Transverse colon (tissue), 4 donors: ENCODE measurements at regions of chr3 and their contacts with region 1.

Region 1: DNA sequence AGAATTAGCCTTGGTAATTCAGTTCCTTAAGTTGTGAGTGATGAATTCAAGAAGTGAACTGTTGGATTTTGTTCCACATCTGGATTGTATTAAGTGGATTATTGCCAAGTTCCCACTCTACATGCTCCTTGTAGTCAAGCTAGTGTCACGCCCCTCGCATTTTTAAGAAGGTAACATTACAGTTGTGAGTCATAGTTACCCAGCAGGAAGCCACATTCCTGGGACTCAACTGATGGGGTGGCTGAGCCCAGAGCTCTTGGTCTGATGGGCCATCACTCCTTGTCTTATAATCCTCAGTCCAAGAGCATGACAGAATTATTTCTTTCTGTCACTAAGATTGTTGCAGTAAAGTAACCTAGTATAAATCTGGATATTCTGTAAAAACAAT is 102.7 kb downstream of the PTPRG start:
- DNase-seq: no peak
- H3K4me3 ChIP-seq: no peak overlapping the region
- H3K27ac ChIP-seq: no peak overlapping the region
- H3K4me1 ChIP-seq: peaks cover 7 to 47% (median 14%) of the 10 kb centered on the region in 4 donors
- H3K27me3 ChIP-seq: no peaks in the 10 kb centered on the region
- CTCF ChIP-seq: no peak
- EP300 ChIP-seq: no peak
- POLR2A ChIP-seq: no peak

Region 2: GRCh38 chr3:60992395-60992794 is 671.7 kb before region 1 on chr3:
- in situ Hi-C with region 1: no loop called
- intact Hi-C with region 1: no loop called
- DNase-seq: no peak
- H3K4me3 ChIP-seq: no peak overlapping the region
- H3K27ac ChIP-seq: no peak overlapping the region
- H3K4me1 ChIP-seq: no peaks in the 10 kb centered on the region
- H3K27me3 ChIP-seq: no peaks in the 10 kb centered on the region
- CTCF ChIP-seq: no peak
- EP300 ChIP-seq: no peak
- POLR2A ChIP-seq: no peak

Region 3: GRCh38 chr3:61053781-61054496 is 610.1 kb before region 1 on chr3:
- in situ Hi-C with region 1: no loop called
- intact Hi-C with region 1: no loop called
- DNase-seq: no peak
- H3K4me3 ChIP-seq: no peak overlapping the region
- H3K27ac ChIP-seq: no peak overlapping the region
- H3K4me1 ChIP-seq: no peaks in the 10 kb centered on the region
- H3K27me3 ChIP-seq: no peaks in the 10 kb centered on the region
- CTCF ChIP-seq: no peak
- EP300 ChIP-seq: no peak
- POLR2A ChIP-seq: no peak

Region 4: DNA sequence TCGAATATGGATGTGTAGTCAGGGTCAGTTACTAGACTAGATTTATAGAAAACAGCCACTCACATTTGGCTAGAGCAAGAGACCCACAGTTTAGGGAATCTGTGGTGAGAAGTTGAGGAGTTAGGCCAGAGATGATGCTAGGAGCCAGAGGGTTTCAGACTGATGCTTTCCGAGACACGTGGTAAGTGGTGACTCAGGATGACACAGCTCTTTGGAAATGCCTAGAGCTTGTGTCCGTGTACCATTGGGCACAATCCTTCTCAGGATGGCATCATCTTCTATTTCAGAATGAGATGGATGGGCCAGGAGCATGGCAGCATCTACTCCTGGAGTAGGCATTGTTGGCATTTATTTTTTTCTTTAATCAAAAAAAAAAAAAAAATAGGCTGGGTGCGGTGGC is 74.2 kb before region 1 on chr3:
- in situ Hi-C with region 1: no loop called
- intact Hi-C with region 1: no loop called
- DNase-seq: no peak
- H3K4me3 ChIP-seq: no peak overlapping the region
- H3K27ac ChIP-seq: no peak overlapping the region
- H3K4me1 ChIP-seq: no peaks in the 10 kb centered on the region
- H3K27me3 ChIP-seq: no peaks in the 10 kb centered on the region
- CTCF ChIP-seq: no peak
- EP300 ChIP-seq: no peak
- POLR2A ChIP-seq: no peak

Region 5: DNA sequence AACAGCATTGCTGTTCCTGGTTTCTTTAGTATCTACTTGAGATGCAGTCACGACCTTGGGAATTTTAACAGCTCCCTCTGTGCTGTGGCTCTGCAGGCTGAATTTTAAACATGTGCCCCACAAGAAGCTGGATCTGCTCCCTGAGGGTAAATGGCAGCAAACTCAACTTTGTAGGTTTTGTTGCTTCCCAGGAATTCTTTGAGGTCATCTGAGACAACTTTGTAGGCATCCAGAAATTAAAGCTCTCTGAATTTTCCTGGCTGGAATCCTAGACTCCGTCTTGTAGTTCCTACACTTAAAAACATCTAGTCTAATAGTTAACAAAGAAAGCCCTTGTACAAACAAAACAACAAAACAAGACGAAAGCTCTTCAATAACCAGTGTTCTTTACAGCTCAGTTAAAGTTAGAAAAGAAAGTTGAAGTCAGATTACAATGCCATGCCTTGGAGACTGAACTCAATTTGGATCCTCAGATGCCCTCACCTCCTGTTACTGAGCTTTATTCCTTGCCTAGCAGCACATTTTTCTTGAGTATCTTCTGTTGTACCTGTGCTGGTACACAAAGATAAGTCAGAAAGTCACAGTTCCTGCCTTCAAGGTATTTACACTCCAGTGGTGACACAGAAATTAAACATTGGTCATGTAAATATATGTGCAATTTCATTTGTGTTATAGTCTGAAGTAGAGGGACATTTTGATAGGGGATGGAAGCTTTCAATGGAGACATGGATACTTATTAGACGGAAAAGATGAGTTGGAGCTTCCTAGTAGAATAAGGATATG is 343.1 kb after region 1 on chr3:
- in situ Hi-C with region 1: no loop called
- intact Hi-C with region 1: loop called (anchors 10 kb)
- DNase-seq: no peak
- H3K4me3 ChIP-seq: no peak overlapping the region
- H3K27ac ChIP-seq: no peak overlapping the region
- H3K4me1 ChIP-seq: no peaks in the 10 kb centered on the region
- H3K27me3 ChIP-seq: no peaks in the 10 kb centered on the region
- CTCF ChIP-seq: no peak
- EP300 ChIP-seq: no peak
- POLR2A ChIP-seq: no peak